Esophagus muscularis mucosa (tissue), 4 donors: ENCODE measurements at regions of chr7 and their contacts with region 1.

Region 1: DNA sequence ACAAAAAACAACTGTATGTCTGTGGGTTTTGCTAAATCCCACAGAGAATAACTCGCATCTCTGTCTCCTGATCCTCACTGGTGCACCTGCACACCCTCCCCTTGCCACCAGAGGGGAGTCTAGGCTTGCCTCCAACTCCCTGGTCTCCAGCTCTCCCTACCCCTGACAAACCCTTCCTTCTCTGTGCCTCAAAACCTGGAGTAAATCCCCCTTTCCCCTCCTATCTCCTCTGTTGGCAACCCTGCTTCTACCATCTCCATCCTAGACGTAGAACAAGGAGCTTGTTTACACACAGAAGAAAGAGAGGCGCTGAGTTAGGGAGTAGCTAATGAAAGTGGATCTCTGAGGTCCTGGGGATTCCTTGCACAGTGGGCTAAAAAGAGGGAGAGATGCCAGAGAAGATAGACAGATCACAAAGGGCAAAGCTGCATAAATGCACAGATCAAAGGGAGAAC is 6.0 kb downstream of the MBLAC1 start:
- DNase-seq: no peak
- H3K4me3 ChIP-seq: no peak overlapping the region
- H3K27ac ChIP-seq: no peak overlapping the region
- H3K4me1 ChIP-seq: peaks cover 12 to 26% (median 20%) of the 10 kb centered on the region in 4 donors
- H3K27me3 ChIP-seq: peaks cover 0 to 3% (median 0%) of the 10 kb centered on the region in 4 donors
- CTCF ChIP-seq: peak; percentile 74 to 80 (median 75)
- EP300 ChIP-seq: no peak
- POLR2A ChIP-seq: no peak

Region 2: GRCh38 chr7:100215895-100216294 is 83.2 kb after region 1 on chr7:
- intact Hi-C with region 1: loop called (anchors 5 kb)
- DNase-seq: no peak
- H3K4me3 ChIP-seq: no peak overlapping the region
- H3K27ac ChIP-seq: peak overlapping the region in 1 of 4 donors; percentile 36
- H3K4me1 ChIP-seq: peaks cover 4 to 19% (median 10%) of the 10 kb centered on the region in 4 donors
- H3K27me3 ChIP-seq: no peaks in the 10 kb centered on the region
- CTCF ChIP-seq: no peak
- EP300 ChIP-seq: no peak
- POLR2A ChIP-seq: no peak

Region 3: DNA sequence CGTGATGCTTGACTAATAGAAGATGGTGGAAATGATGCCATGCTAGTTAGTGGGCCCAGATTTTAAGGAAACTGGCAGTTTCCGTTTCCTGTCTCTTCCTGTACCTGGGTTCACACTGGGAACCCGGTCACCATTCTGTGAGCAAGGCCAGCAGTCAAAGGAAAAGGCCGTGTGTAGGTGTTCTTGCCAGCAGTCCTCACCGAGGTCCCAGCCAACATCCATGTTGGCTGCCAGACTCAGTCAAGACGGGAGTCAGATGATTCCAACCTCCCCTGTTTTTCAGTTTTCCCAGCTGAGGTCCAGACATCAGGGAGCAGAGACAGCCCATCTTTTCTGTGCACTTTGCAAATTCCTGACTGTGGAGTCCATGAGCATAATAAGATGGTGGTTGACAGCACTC is 210.0 kb after region 1 on chr7:
- intact Hi-C with region 1: no loop called
- DNase-seq: no peak
- H3K4me3 ChIP-seq: no peak overlapping the region
- H3K27ac ChIP-seq: peak overlapping the region in 3 of 4 donors; percentile 10 to 21 (median 21)
- H3K4me1 ChIP-seq: peaks cover 12 to 28% (median 15%) of the 10 kb centered on the region in 4 donors
- H3K27me3 ChIP-seq: no peaks in the 10 kb centered on the region
- CTCF ChIP-seq: no peak
- EP300 ChIP-seq: no peak
- POLR2A ChIP-seq: no peak